Left cardiac atrium (tissue), 4 donors: ENCODE measurements at regions of chr15 and their contacts with region 1.

Region 1: DNA sequence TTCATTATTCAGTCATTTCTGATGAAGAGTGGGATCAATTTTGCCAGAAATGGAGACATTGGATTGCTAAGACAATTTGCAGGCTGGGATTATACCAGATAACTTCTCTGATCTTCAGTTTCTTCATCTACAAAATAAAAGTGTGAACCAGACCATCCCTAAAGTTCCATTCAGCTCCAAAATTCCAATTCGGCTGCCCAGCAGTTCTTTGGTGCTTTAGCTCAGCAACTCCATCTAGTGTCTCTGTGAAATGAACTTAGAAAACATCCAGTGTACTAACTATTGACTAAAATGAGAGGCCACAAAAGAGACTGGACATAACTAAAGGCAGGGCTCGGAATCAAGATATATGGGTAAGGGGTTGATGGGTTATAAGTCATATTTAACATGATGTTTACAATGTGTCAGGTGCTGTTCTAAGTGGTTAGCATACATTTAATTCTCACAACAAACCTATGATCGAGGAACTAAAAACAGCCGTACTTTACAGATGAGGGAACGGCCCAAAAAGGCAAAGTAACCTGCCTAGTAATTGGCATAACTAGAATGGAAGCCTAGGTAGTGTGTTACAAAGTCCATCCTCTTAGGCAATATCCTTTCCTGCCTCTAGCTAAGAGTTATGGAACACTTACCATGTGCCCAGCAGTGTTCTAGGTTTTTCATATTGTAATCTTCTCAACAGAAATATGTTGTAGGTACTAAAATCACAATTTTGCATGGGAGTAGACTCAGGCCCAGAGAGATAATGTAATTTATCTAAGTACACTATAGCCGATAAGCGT is 17.0 kb downstream of the THAP10 start:
- DNase-seq: no peak
- ATAC-seq: peak; percentile 41 to 48

Region 2: DNA sequence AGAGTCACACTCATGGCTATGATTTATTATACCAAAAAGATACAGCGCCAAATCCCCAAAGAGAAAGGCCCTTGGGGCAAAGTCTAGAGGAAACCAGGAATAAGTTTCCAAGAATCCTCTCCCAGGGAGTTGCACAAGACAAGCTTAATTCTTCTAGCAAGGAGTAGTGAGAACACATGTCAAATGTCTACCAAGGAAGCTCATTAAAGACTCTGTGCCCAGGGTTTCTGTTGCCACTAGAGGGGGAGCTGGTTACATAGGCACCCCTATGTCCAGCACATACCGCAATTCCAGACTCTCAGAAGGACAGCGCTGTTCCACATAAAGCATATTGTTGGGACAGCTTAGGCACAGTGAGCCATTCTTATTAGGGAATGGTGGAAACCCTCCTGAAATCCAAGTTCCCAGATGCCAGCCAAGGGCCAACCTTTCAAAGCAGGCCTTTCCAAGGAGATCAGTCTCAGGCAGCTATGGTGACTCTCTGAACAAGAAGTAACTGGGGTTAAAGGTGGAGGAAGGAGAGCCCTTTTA is 306.0 kb before region 1 on chr15:
- intact Hi-C with region 1: loop called in 1 of 2 experiments (anchors 10 kb)
- DNase-seq: no peak
- ATAC-seq: peak; percentile 72 to 84

Region 3: DNA sequence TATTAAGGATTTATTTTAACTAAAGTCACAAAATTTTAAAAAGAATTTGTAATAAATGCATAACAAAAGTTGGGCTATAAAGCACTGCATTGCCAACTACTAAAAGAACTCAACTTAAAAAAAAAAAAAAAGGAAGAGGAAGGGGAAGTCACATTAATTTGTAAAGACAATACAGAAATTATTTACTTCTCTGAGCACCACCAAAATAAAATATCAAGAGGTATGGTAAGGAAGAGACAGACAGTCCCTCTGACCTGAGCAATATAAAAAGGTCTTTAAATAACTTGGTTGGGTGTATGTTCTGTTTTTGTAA is 195.3 kb before region 1 on chr15:
- intact Hi-C with region 1: loop called in 1 of 2 experiments (anchors 10 kb)
- DNase-seq: no peak
- ATAC-seq: no peak

Region 4: DNA sequence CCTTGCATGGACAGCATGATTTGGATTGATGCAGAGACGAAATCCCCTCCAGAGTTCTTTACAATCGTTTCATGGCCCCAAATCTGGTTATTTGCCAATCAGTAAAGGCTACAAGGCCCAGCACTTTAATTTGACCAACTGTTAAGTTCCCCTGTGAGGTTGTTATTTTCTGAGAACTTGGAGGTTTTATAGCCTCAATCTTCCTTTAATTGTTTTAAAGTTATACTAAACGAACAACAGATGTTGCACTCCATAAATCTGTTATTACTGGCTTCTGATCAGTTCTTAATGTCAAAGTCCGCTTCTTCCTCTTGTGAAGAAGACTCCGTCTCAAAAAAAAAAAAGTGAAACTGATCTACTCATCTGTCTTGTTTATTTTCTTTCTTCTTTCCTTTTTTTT is 52.0 kb before region 1 on chr15:
- intact Hi-C with region 1: loop called (anchors 2 to 5 kb)
- DNase-seq: no peak
- ATAC-seq: no peak

Region 5: GRCh38 chr15:70974004-70974832 is 99.0 kb after region 1 on chr15:
- intact Hi-C with region 1: no loop called
- DNase-seq: no peak
- ATAC-seq: no peak